ENCODE measurements at regions of chr6 and their contacts with region 1.

Region 1: GRCh38 chr6:138428944-138429598 is 25.0 kb downstream of the HEBP2 start:
- DNase-seq: no peak
- H3K4me3 ChIP-seq: no peak overlapping the region
- H3K27ac ChIP-seq: no peak overlapping the region
- H3K4me1 ChIP-seq: no peaks in the 10 kb centered on the region
- H3K27me3 ChIP-seq: no peaks in the 10 kb centered on the region
- CTCF ChIP-seq: peak in 2 of 3 donors; percentile 29 to 37
- EP300 ChIP-seq: no peak
- POLR2A ChIP-seq: no peak

Region 2: DNA sequence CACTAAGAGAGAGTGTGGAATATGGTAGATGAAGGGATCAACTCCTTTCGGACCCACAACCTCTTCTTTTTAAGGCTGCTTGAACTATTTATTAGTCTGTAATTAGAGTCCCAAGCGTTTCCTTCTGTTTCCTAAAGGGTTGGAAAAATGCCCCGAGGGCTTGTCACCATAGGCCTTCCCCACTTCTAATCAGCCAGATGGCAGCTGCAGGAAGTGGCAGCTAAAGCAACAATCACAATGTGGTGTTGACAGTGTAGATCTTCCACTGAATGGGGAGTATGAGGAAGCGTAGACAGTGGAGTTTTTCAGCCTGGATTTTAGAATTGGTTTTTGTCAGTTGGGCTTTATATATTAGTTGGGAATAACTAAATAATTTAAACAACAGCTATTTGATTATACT is 1466.4 kb before region 1 on chr6:
- intact Hi-C with region 1: loop called in 1 of 4 experiments (anchors 5 kb)
- DNase-seq: no peak
- H3K4me3 ChIP-seq: no peak overlapping the region
- H3K27ac ChIP-seq: no peak overlapping the region
- H3K4me1 ChIP-seq: no peaks in the 10 kb centered on the region
- H3K27me3 ChIP-seq: no peaks in the 10 kb centered on the region
- CTCF ChIP-seq: no peak
- EP300 ChIP-seq: no peak
- POLR2A ChIP-seq: no peak

Region 3: GRCh38 chr6:138580801-138581200 is 151.7 kb after region 1 on chr6:
- intact Hi-C with region 1: loop called in 2 of 4 experiments (anchors 5 to 10 kb)
- DNase-seq: no peak
- H3K4me3 ChIP-seq: no peak overlapping the region
- H3K27ac ChIP-seq: no peak overlapping the region
- H3K4me1 ChIP-seq: no peaks in the 10 kb centered on the region
- H3K27me3 ChIP-seq: no peaks in the 10 kb centered on the region
- CTCF ChIP-seq: no peak
- EP300 ChIP-seq: no peak
- POLR2A ChIP-seq: no peak

Region 4: DNA sequence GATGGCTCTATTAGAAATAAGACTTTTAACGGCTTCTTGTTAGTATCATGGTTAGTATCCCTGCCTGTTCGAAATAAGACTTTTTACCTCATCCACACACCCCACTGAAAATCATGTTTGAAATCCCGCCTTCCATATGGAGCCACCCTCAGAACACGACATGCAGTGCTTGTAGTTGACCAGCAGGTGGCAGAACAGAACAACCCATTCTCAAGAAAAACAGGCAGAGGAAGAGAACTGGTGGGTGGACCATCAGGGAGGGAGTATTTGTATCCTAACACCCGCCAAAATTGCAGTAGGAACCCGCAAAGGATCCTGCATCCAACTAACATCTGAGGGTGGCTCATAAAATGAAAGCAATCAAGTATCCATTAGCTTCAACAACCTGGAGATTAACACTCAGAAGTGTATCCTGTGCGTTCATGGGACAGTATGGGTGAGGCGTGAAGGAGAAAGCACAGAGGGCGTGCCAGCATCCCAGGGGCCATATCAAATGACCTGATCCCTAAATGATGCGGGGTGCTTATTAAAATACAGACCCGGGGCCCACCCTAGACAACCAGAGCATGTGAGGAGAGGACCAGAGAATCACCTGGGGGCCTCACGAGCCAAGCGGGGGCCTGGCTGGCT is 159.8 kb after region 1 on chr6:
- intact Hi-C with region 1: loop called in 2 of 4 experiments (anchors 5 to 10 kb)
- DNase-seq: peak; percentile 23 to 62 (median 45)
- H3K4me3 ChIP-seq: no peak overlapping the region
- H3K27ac ChIP-seq: no peak overlapping the region
- H3K4me1 ChIP-seq: peaks cover 1% of the 10 kb centered on the region
- H3K27me3 ChIP-seq: no peaks in the 10 kb centered on the region
- CTCF ChIP-seq: peak; percentile 57 to 68 (median 62)
- EP300 ChIP-seq: no peak
- POLR2A ChIP-seq: no peak

Region 5: GRCh38 chr6:138765896-138766655 is 337.0 kb after region 1 on chr6:
- intact Hi-C with region 1: loop called in 1 of 4 experiments (anchors 10 kb)
- DNase-seq: no peak
- H3K4me3 ChIP-seq: no peak overlapping the region
- H3K27ac ChIP-seq: no peak overlapping the region
- H3K4me1 ChIP-seq: no peaks in the 10 kb centered on the region
- H3K27me3 ChIP-seq: no peaks in the 10 kb centered on the region
- CTCF ChIP-seq: peak in 2 of 3 donors; percentile 25 to 51
- EP300 ChIP-seq: no peak
- POLR2A ChIP-seq: no peak

Measured in ovary (tissue), 10 donors.